H1 (cell line): ENCODE measurements at regions of chr12 and their contacts with region 1.

Region 1: GRCh38 chr12:132560614-132561426 is 49.6 kb downstream of the LRCOL1 start:
- DNase-seq: peak; percentile 60 to 96
- H3K4me3 ChIP-seq: peak overlapping the region; percentile 79 to 94 (median 90)
- H3K27ac ChIP-seq: peak overlapping the region; percentile 74; the same call in 1 of the 2 replicates
- H3K4me1 ChIP-seq: peaks cover 0 to 10% (median 6%) of the 10 kb centered on the region in 4 experiments; a peak in 5 of 7 replicates
- H3K27me3 ChIP-seq: peaks cover 8 to 39% (median 32%) of the 10 kb centered on the region in 4 experiments
- CTCF ChIP-seq: peak in 2 of 3 experiments; percentile 88 to 91; a peak in 3 of 4 replicates
- EP300 ChIP-seq: no peak
- POLR2A ChIP-seq: peak in 1 of 2 experiments; percentile 63; a peak in 2 of 3 replicates
- RAD21 ChIP-seq: peak; percentile 34 to 53; a peak in 3 of 4 replicates

Region 2: GRCh38 chr12:132600048-132601032 is 39.5 kb after region 1 on chr12:
- CTCF ChIA-PET with region 1: interaction called, 13 read pairs
- POLR2A ChIA-PET with region 1: interaction called, 3 read pairs
- DNase-seq: peak in 1 of 2 experiments; percentile 81
- H3K4me3 ChIP-seq: peak overlapping the region in 1 of 4 experiments; percentile 23; a peak in 1 of 8 replicates
- H3K27ac ChIP-seq: no peak overlapping the region
- H3K4me1 ChIP-seq: peaks cover 0 to 6% (median 2%) of the 10 kb centered on the region in 4 experiments; a peak in 4 of 7 replicates
- H3K27me3 ChIP-seq: peaks cover 12 to 65% (median 55%) of the 10 kb centered on the region in 4 experiments
- CTCF ChIP-seq: peak in 2 of 3 experiments; percentile 81 to 92; a peak in 3 of 4 replicates
- EP300 ChIP-seq: no peak
- POLR2A ChIP-seq: no peak
- RAD21 ChIP-seq: peak; percentile 74 to 83